CD14-positive monocyte (primary cell): ENCODE measurements at regions of chr2 and their contacts with region 1.

Region 1: GRCh38 chr2:27095745-27096651 is 9.4 kb downstream of the KHK start:
- DNase-seq: peak; percentile 48 to 65 (median 55)
- H3K4me3 ChIP-seq: peak overlapping the region; percentile 44 to 78 (median 48)
- H3K4me3 Mint-ChIP-seq: peak overlapping the region; percentile 84 to 93
- H3K27ac ChIP-seq: peak overlapping the region; percentile 21 to 77
- H3K27ac Mint-ChIP-seq: peak overlapping the region; percentile 80 to 96 (median 90)
- H3K4me1 ChIP-seq: peaks cover 23 to 24% of the 10 kb centered on the region in 2 donors
- H3K4me1 Mint-ChIP-seq: peaks cover 21% of the 10 kb centered on the region
- H3K27me3 ChIP-seq: no peaks in the 10 kb centered on the region
- H3K27me3 Mint-ChIP-seq: peaks cover 0 to 3% (median 3%) of the 10 kb centered on the region in 3 donors
- CTCF ChIP-seq: no peak

Region 2: DNA sequence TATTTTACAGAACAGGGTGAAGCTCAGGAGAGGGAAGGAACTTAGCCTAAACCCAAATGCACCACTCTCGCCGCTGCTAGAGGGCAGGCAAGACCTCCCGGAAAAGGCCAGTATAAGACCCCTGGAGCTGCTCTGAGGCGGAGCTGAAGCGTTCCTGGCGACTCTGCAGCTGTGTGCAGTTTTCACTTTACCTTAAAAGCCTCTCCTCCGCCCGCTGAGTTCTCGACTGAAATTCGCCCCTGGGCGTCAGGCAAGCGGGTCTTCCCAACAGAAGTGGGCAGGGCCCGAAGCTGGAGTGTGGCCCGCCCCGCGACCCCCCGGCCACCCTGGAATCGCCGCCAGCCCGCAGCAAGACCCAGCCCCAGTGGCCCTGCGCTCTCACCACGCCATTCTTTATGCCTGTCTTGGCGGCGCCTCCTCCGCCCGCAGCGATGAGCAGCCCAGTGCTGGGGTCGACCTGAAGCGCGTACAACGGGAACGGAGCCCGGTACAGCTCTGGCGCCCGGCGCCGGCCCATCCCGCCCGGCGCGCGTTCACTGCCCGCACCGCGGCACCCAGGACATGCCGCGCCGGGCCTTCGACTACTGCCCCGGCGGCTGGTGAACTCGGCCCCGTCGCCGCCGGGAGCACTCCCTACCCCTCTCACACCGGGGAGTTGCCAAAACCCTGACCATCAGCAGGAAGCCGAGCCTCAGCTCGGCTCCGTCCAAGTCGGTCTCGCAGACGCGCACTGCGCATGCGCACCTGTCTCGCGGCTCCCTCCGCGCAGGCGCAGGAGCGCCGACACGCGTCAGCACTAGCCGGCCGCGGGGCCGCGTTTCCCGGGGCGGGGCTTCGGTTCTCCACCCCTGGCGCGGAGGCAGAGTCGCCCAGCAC is 38.1 kb after region 1 on chr2 and contains the start of gene PREB:
- intact Hi-C with region 1: loop called (anchors 5 kb)
- DNase-seq: peak; percentile 94 to 97 (median 96)
- H3K4me3 ChIP-seq: peak within 1 kb of the TSS; percentile 77 to 98 (median 81)
- H3K4me3 Mint-ChIP-seq: peak within 1 kb of the TSS; percentile 88 to 95
- H3K27ac ChIP-seq: peak within 1 kb of the TSS; percentile 34 to 95
- H3K27ac Mint-ChIP-seq: peak within 1 kb of the TSS; percentile 89 to 96 (median 95)
- H3K4me1 ChIP-seq: peaks cover 19% of the 10 kb centered on the region in 2 donors
- H3K4me1 Mint-ChIP-seq: peaks cover 18% of the 10 kb centered on the region
- H3K27me3 ChIP-seq: no peaks in the 10 kb centered on the region
- H3K27me3 Mint-ChIP-seq: peaks cover 0 to 9% (median 4%) of the 10 kb centered on the region in 3 donors
- CTCF ChIP-seq: peak; percentile 32
- polyA plus RNA-seq, gene PREB: 70.0 to 78.2 (median 71.7) TPM

Region 3: DNA sequence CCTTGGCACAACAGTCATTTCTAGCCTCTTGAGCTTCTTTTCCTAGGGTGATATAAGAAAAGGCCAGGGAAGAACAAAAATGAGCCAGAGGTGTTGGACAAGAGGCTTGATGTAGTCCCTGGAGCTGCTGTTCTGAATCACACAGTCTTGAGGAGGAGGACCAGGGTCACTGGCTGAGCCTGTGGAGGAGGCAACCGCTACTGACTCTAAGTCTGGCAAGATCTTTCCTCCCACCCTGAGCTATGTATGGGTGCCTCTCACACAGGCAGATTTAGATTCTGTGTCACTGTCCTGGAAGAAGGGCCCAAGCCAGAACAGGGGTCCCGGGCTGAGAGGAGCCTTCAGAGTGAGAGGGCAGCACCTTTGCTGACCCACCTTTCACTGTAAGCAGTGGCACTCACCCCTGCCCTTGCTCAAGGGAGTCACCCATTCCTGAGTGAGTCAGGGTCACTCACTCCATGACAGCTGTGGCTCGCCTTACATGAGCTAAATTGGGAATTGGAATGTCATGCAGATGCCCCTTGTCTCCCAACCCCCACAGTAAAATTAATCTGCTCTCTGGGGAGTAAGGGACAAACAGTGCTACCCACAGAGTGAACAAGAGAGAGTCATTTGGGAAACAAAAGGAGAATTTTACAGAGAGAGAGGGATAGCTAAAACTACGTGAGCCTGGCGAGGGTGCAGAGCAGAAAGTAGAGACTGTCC is 186.0 kb after region 1 on chr2 and contains the start of gene TRIM54:
- intact Hi-C with region 1: loop called (anchors 2 to 5 kb)
- DNase-seq: no peak
- H3K4me3 ChIP-seq: no peak within 1 kb of the TSS
- H3K4me3 Mint-ChIP-seq: no peak within 1 kb of the TSS
- H3K27ac ChIP-seq: no peak within 1 kb of the TSS
- H3K27ac Mint-ChIP-seq: peak within 1 kb of the TSS in 1 of 7 donors; percentile 47
- H3K4me1 ChIP-seq: peaks cover 0 to 6% of the 10 kb centered on the region in 2 donors
- H3K4me1 Mint-ChIP-seq: peaks cover 7% of the 10 kb centered on the region
- H3K27me3 ChIP-seq: no peaks in the 10 kb centered on the region
- H3K27me3 Mint-ChIP-seq: peaks cover 2 to 14% (median 13%) of the 10 kb centered on the region in 3 donors
- CTCF ChIP-seq: no peak
- polyA plus RNA-seq, gene TRIM54: not detected

Region 4: GRCh38 chr2:27303093-27304025 is 207.4 kb after region 1 on chr2:
- intact Hi-C with region 1: loop called in 1 of 2 experiments (anchors 5 kb)
- DNase-seq: peak; percentile 38 to 74 (median 66)
- H3K4me3 ChIP-seq: peak overlapping the region; percentile 23 to 67 (median 28)
- H3K4me3 Mint-ChIP-seq: peak overlapping the region; percentile 74 to 87
- H3K27ac ChIP-seq: no peak overlapping the region
- H3K27ac Mint-ChIP-seq: peak overlapping the region in 4 of 7 donors; percentile 40 to 64 (median 42)
- H3K4me1 ChIP-seq: peaks cover 12 to 14% of the 10 kb centered on the region in 2 donors
- H3K4me1 Mint-ChIP-seq: peaks cover 17% of the 10 kb centered on the region
- H3K27me3 ChIP-seq: peaks cover 4 to 32% of the 10 kb centered on the region in 2 donors
- H3K27me3 Mint-ChIP-seq: peaks cover 37 to 47% (median 46%) of the 10 kb centered on the region in 3 donors
- CTCF ChIP-seq: peak; percentile 95

Region 5: GRCh38 chr2:27522400-27522945 is 426.5 kb after region 1 on chr2:
- intact Hi-C with region 1: no loop called
- DNase-seq: no peak
- H3K4me3 ChIP-seq: no peak overlapping the region
- H3K4me3 Mint-ChIP-seq: no peak overlapping the region
- H3K27ac ChIP-seq: no peak overlapping the region
- H3K27ac Mint-ChIP-seq: no peak overlapping the region
- H3K4me1 ChIP-seq: no peaks in the 10 kb centered on the region
- H3K4me1 Mint-ChIP-seq: no peaks in the 10 kb centered on the region
- H3K27me3 ChIP-seq: peaks cover 0 to 2% of the 10 kb centered on the region in 2 donors
- H3K27me3 Mint-ChIP-seq: peaks cover 0 to 6% (median 1%) of the 10 kb centered on the region in 3 donors
- CTCF ChIP-seq: no peak

Region 6: DNA sequence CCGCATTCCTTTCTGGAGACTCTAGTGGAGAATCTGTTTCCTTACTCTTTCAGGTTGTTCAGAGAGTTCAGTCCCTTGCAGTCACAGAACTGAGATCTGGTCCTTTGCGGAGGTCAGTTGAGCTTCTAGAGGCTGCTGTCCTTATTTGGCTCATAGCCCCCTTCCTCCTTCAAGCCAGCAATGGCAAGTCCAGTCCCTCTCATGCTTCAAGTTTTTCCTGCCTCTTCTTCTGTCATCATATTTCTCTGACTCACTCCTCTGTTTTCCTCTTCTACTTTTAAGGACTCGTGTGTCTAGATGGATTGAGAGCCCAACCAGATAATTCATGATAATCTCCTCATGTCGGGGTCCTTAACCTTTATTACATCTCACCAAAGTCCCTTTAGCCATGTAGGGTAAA is 1123.1 kb after region 1 on chr2:
- intact Hi-C with region 1: no loop called
- DNase-seq: no peak
- H3K4me3 ChIP-seq: no peak overlapping the region
- H3K4me3 Mint-ChIP-seq: no peak overlapping the region
- H3K27ac ChIP-seq: no peak overlapping the region
- H3K27ac Mint-ChIP-seq: no peak overlapping the region
- H3K4me1 ChIP-seq: peaks cover 10 to 12% of the 10 kb centered on the region in 2 donors
- H3K4me1 Mint-ChIP-seq: peaks cover 27% of the 10 kb centered on the region
- H3K27me3 ChIP-seq: no peaks in the 10 kb centered on the region
- H3K27me3 Mint-ChIP-seq: peaks cover 0 to 6% (median 0%) of the 10 kb centered on the region in 3 donors
- CTCF ChIP-seq: no peak